ENCODE measurements at regions of chr22 and their contacts with region 1.

Region 1: GRCh38 chr22:43993027-43993760 is 30.9 kb upstream of the PARVB start:
- DNase-seq: peak; percentile 64
- ATAC-seq: peak; percentile 93
- H3K4me3 ChIP-seq: no peak overlapping the region
- H3K27ac ChIP-seq: no peak overlapping the region
- H3K4me1 ChIP-seq: peaks cover 7% of the 10 kb centered on the region; the same call in 1 of the 2 replicates
- H3K27me3 ChIP-seq: no peaks in the 10 kb centered on the region
- CTCF ChIP-seq: peak; percentile 93
- POLR2A ChIP-seq: no peak
- RAD21 ChIP-seq: peak; percentile 95

Region 2: DNA sequence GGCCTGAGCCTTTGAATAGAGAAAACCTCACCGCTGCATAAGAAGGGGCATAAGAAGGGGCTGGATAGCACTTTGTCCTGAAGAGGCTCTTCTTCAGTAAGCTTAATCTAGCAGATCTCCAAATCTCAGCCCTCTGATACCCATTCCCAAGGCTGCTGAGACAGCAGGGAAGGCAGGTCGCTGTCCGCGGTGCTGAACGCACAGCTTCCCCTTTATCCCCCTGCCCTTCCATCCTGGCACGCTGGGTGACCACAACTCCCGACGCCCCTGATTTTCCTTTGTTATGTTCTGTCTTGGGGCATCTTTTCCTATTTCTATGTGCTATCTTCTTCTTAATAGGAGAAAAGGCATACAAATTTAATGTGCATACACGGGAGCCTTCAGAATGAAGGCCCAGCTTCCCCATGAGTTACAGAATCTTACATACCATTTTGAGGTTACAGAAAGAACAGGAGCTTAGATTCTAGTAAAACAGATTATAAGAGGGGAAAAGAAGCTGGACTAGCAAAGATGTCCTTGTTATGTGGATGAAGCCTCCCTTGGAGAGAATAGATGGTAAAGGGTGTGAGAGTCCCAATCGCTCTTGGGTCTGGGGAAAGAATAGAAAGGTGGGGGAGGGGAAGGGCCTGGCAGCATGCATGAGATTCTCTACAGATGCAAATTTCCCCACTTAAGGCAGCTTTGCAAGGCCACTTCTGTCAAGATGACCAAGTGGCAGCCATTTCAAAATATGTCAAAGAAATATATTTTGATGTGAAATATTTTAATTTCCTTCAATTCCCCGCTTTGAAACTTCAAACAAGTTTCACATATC is 125.1 kb before region 1 on chr22:
- CTCF ChIA-PET with region 1: no interaction called
- POLR2A ChIA-PET with region 1: no interaction called
- dilution Hi-C with region 1: no loop called
- in situ Hi-C with region 1: no loop called
- intact Hi-C with region 1: no loop called
- DNase-seq: peak; percentile 73
- ATAC-seq: peak; percentile 99
- H3K4me3 ChIP-seq: no peak overlapping the region
- H3K27ac ChIP-seq: no peak overlapping the region
- H3K4me1 ChIP-seq: no peaks in the 10 kb centered on the region
- H3K27me3 ChIP-seq: peaks cover 3% of the 10 kb centered on the region
- CTCF ChIP-seq: no peak
- POLR2A ChIP-seq: no peak
- RAD21 ChIP-seq: no peak

Region 3: GRCh38 chr22:44075670-44076069 is 82.5 kb after region 1 on chr22:
- CTCF ChIA-PET with region 1: interaction called, 6 read pairs
- POLR2A ChIA-PET with region 1: no interaction called
- dilution Hi-C with region 1: no loop called
- in situ Hi-C with region 1: loop called (anchors 5 kb)
- intact Hi-C with region 1: loop called (anchors 2 kb)
- DNase-seq: no peak
- ATAC-seq: no peak
- H3K4me3 ChIP-seq: no peak overlapping the region
- H3K27ac ChIP-seq: no peak overlapping the region
- H3K4me1 ChIP-seq: no peaks in the 10 kb centered on the region
- H3K27me3 ChIP-seq: no peaks in the 10 kb centered on the region
- CTCF ChIP-seq: no peak
- POLR2A ChIP-seq: no peak
- RAD21 ChIP-seq: no peak

Region 4: DNA sequence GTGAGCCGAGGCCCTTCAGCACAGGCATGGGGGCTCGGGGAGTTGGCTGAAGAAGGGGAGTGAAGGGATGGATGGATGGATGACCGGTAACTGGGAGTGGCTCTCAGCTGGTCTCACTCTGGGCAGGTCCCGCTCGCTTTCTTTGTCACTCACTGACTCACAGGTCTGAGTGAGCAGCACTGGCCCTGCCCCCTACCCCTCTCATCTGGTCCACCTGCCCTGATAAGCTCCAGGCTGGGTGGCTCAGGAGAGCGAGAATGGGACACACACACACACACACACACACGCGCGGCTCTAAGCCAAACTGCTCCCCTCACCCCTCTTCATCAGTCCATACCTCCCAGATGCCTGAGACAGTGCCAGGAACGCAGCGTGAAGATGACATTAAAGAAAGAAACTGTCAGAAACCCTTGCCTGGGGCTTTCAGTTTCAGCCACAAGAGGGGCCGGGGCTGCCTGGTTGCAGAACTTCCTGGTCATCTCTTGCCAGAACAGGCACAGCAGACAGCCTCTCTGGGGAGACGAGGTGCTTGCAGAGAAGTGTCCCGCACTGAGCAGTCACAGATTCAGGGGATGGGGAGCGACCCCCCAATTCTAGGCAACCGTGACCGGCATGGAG is 336.1 kb after region 1 on chr22:
- CTCF ChIA-PET with region 1: interaction called, 5 read pairs
- POLR2A ChIA-PET with region 1: no interaction called
- dilution Hi-C with region 1: no loop called
- in situ Hi-C with region 1: loop called (anchors 10 kb)
- intact Hi-C with region 1: loop called (anchors 5 kb)
- DNase-seq: peak; percentile 27
- ATAC-seq: no peak
- H3K4me3 ChIP-seq: no peak overlapping the region
- H3K27ac ChIP-seq: no peak overlapping the region
- H3K4me1 ChIP-seq: peaks cover 13% of the 10 kb centered on the region; the same call in 1 of the 2 replicates
- H3K27me3 ChIP-seq: peaks cover 16% of the 10 kb centered on the region
- CTCF ChIP-seq: 0 out of 2 replicates have a peak, but pooled peaks have one; percentile 5
- POLR2A ChIP-seq: no peak
- RAD21 ChIP-seq: no peak

Region 5: GRCh38 chr22:44497218-44497904 is 504.2 kb after region 1 on chr22:
- CTCF ChIA-PET with region 1: no interaction called
- POLR2A ChIA-PET with region 1: no interaction called
- dilution Hi-C with region 1: no loop called
- in situ Hi-C with region 1: no loop called
- intact Hi-C with region 1: loop called (anchors 5 kb)
- DNase-seq: peak; percentile 34
- ATAC-seq: peak; percentile 6
- H3K4me3 ChIP-seq: peak overlapping the region; percentile 85
- H3K27ac ChIP-seq: peak overlapping the region; percentile 76
- H3K4me1 ChIP-seq: peaks cover 19% of the 10 kb centered on the region
- H3K27me3 ChIP-seq: no peaks in the 10 kb centered on the region
- CTCF ChIP-seq: no peak
- POLR2A ChIP-seq: no peak; the same call in 1 of the 2 replicates
- RAD21 ChIP-seq: 0 out of 2 replicates have a peak, but pooled peaks have one; percentile 1

Region 6: DNA sequence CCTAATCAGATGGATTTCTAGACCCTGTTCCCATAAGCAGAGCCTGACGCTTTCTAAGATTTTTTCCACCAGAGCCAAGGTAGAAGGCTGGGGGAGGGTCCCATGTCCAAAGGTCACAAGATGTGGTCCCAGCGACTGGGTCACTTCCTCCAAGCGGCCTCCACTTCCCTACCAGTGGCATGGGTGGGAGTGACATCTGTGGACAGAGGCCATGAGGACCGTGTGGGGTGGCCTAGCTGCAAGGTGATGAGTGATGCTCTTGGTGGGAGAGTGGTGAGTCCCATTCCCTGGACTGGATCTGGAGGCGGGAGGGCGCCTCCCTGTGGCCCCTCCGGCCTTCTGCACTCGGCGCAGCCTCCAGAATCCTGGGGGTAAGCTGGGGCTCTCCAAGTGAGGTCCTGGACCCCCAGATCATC is 676.4 kb after region 1 on chr22:
- CTCF ChIA-PET with region 1: no interaction called
- POLR2A ChIA-PET with region 1: no interaction called
- dilution Hi-C with region 1: no loop called
- in situ Hi-C with region 1: no loop called
- intact Hi-C with region 1: loop called (anchors 5 kb)
- DNase-seq: peak; percentile 37
- ATAC-seq: peak; percentile 28
- H3K4me3 ChIP-seq: peak overlapping the region; percentile 75
- H3K27ac ChIP-seq: no peak overlapping the region
- H3K4me1 ChIP-seq: peaks cover 16% of the 10 kb centered on the region; the same call in 1 of the 2 replicates
- H3K27me3 ChIP-seq: no peaks in the 10 kb centered on the region; the same call in 1 of the 2 replicates
- CTCF ChIP-seq: peak; percentile 54
- POLR2A ChIP-seq: no peak
- RAD21 ChIP-seq: peak; percentile 51

Measured in IMR-90 (cell line).